ENCODE measurements at regions of chr5 and their contacts with region 1.

Region 1: DNA sequence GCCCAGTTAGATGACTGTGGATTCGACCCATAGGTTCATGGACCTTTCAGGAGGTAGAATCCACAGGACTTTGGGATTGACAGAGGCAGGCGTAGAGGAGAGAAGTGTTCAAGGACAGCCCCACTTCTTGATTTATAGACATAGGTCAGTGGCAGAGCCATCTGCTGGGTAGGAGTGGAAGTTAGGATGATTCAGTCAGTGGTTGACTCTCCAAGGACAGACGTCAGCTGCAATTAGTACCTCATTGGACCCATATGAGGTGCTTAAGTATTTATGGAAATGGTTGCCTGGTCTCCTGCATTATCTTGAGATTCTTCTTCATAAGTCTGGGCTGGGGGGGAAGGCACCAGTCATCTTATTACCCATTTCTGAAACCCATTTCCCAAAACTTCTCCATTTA is 70.9 kb downstream of the SH3RF2 start:
- DNase-seq: no peak

Region 2: DNA sequence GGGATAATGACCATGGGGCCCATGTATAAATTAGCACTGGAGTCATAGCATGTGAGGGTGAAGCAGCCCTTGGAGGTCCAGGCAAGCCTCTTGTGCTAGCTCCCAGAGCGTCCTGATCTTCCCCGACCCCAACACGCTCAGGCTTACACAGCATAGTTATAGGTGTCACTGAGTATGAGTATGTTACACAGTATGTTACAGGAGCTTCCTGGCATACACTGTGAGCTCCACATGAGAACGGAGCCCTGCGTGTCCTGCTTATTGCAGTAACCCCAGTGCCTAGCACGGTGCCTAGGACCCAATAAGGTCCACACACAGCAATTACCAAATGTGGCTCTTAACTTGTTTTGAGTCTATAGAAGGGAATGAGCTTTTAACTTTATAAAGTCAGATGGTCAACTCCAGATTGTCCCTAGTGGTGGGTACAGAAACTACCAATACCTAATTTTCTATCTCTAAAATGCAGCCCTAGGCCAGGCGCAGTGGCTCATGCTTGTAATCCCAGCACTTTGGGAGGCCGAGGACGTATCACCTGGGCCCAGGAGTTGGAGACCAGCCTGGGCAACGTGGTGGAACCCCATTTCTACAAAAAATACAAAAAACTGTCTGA is 34.0 kb after region 1 on chr5:
- CTCF ChIA-PET with region 1: interaction called, 10 read pairs
- POLR2A ChIA-PET with region 1: no interaction called
- DNase-seq: no peak

Measured in HEK293T (cell line).